IMR-90 (cell line): ENCODE measurements at regions of chr18 and their contacts with region 1.

Region 1: GRCh38 chr18:30113454-30113853 is 929.1 kb downstream of the DSC3 start:
- DNase-seq: no peak
- ATAC-seq: no peak
- H3K4me3 ChIP-seq: no peak overlapping the region
- H3K27ac ChIP-seq: no peak overlapping the region
- H3K4me1 ChIP-seq: no peaks in the 10 kb centered on the region
- H3K27me3 ChIP-seq: no peaks in the 10 kb centered on the region
- CTCF ChIP-seq: no peak
- POLR2A ChIP-seq: no peak
- RAD21 ChIP-seq: no peak

Region 2: GRCh38 chr18:28541276-28541930 is 1572.1 kb before region 1 on chr18:
- CTCF ChIA-PET with region 1: no interaction called
- POLR2A ChIA-PET with region 1: no interaction called
- dilution Hi-C with region 1: no loop called
- in situ Hi-C with region 1: no loop called
- intact Hi-C with region 1: loop called (anchors 5 kb)
- DNase-seq: no peak
- ATAC-seq: peak; percentile 65
- H3K4me3 ChIP-seq: no peak overlapping the region
- H3K27ac ChIP-seq: no peak overlapping the region
- H3K4me1 ChIP-seq: no peaks in the 10 kb centered on the region
- H3K27me3 ChIP-seq: no peaks in the 10 kb centered on the region
- CTCF ChIP-seq: no peak
- POLR2A ChIP-seq: no peak
- RAD21 ChIP-seq: no peak

Region 3: DNA sequence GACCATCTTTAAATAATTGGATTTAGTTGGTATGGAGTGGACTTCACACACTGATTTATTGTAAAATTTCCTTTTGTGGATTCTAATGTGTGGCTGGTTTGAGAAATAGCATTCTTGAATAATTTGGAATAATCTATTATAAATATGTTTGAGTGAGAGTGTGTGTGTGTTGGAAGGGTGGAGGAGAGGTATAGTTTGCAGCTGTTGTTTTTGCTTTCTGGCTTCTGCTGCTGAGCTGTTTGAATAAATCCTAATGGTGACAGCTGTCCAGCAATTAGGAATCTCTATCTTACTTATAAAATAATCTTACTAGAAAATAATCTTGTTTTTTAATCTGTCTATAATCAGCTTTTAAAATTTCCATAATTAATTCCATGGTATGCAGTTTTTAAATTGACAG is 653.5 kb before region 1 on chr18:
- CTCF ChIA-PET with region 1: no interaction called
- POLR2A ChIA-PET with region 1: no interaction called
- dilution Hi-C with region 1: no loop called
- in situ Hi-C with region 1: no loop called
- intact Hi-C with region 1: no loop called
- DNase-seq: no peak
- ATAC-seq: no peak
- H3K4me3 ChIP-seq: no peak overlapping the region
- H3K27ac ChIP-seq: no peak overlapping the region
- H3K4me1 ChIP-seq: no peaks in the 10 kb centered on the region
- H3K27me3 ChIP-seq: no peaks in the 10 kb centered on the region
- CTCF ChIP-seq: no peak
- POLR2A ChIP-seq: no peak
- RAD21 ChIP-seq: no peak

Region 4: DNA sequence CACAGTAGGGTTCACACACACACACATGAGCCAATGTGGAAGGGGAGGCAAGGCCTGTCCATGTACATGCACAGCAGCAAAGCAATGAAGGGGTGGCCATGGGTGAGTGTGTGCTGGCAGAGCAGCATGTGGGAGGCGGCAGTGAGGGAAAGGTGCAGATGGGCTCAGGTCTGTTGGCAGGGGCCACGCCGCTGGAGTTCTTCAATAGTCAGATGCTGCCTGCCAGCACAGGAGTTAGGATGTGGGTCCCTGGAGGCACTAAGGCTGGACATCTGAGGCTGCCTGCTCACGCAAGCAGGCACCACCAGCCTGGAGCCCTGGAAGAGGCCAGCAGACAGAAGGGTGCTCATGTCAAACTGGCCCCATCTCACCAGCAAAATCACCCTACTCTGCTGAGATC is 375.8 kb before region 1 on chr18:
- CTCF ChIA-PET with region 1: no interaction called
- POLR2A ChIA-PET with region 1: no interaction called
- dilution Hi-C with region 1: no loop called
- in situ Hi-C with region 1: no loop called
- intact Hi-C with region 1: no loop called
- DNase-seq: no peak
- ATAC-seq: no peak
- H3K4me3 ChIP-seq: no peak overlapping the region
- H3K27ac ChIP-seq: no peak overlapping the region
- H3K4me1 ChIP-seq: no peaks in the 10 kb centered on the region
- H3K27me3 ChIP-seq: no peaks in the 10 kb centered on the region
- CTCF ChIP-seq: no peak
- POLR2A ChIP-seq: no peak
- RAD21 ChIP-seq: no peak

Region 5: DNA sequence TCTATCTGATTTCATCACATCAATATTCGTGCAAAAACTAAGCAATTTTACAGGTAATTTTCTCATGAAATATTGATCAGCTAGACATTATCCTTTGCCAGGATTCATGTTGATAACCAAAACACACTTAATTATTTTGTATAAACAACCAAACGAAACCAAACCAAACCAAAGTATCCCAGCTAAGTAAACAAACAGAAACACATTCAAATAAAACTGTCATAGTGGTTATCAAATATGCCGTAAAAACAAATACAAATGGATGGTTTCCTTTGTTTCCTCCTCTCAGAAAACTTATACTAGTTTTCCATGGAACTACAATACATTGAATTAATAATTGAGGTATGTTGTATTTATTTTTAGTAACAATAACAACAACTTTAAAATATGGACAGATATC is 151.7 kb after region 1 on chr18:
- CTCF ChIA-PET with region 1: no interaction called
- POLR2A ChIA-PET with region 1: no interaction called
- dilution Hi-C with region 1: no loop called
- in situ Hi-C with region 1: no loop called
- intact Hi-C with region 1: no loop called
- DNase-seq: no peak
- ATAC-seq: no peak
- H3K4me3 ChIP-seq: no peak overlapping the region
- H3K27ac ChIP-seq: no peak overlapping the region
- H3K4me1 ChIP-seq: no peaks in the 10 kb centered on the region
- H3K27me3 ChIP-seq: no peaks in the 10 kb centered on the region
- CTCF ChIP-seq: no peak
- POLR2A ChIP-seq: no peak
- RAD21 ChIP-seq: no peak